ENCODE measurements at regions of chr4 and their contacts with region 1.

Region 1: GRCh38 chr4:71186566-71187403 is 152.0 kb upstream of the SLC4A4 start:
- DNase-seq: peak; percentile 77
- ATAC-seq: peak; percentile 97

Region 2: GRCh38 chr4:71553605-71554004 is 366.8 kb after region 1 on chr4:
- intact Hi-C with region 1: loop called (anchors 1 kb)
- DNase-seq: no peak
- ATAC-seq: peak; percentile 52